ENCODE measurements at regions of chr1 and their contacts with region 1.

Region 1: DNA sequence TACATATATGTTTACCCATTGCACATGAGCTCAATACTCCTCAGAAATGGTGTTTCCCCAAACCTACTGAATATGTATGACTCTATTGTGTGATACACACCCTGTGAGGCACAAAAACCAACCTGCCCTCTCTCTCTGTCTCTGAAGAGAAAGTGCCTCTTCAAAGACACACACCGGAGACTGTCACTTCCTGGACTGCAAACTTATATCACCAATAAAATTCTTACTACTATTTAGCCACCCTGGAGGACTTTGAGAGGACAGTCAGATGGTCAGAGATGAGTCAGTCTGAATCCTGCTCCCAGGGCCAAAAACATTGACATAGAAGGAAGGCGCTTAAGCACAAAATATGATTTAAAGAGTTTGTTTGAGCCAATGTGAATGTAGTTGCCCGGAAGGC is 110.4 kb downstream of the PPIAL4G start:
- DNase-seq: peak; percentile 63 to 86 (median 69)
- H3K4me3 ChIP-seq: peak overlapping the region in 1 of 2 donors; percentile 0
- H3K4me3 Mint-ChIP-seq: peak overlapping the region; percentile 77 to 89 (median 83)
- H3K27ac ChIP-seq: peak overlapping the region; percentile 61
- H3K27ac Mint-ChIP-seq: peak overlapping the region; percentile 86 to 99 (median 98)
- H3K4me1 ChIP-seq: peaks cover 47% of the 10 kb centered on the region
- H3K4me1 Mint-ChIP-seq: peaks cover 28 to 51% (median 38%) of the 10 kb centered on the region in 4 donors
- H3K27me3 ChIP-seq: no peaks in the 10 kb centered on the region
- H3K27me3 Mint-ChIP-seq: no peaks in the 10 kb centered on the region

Region 2: DNA sequence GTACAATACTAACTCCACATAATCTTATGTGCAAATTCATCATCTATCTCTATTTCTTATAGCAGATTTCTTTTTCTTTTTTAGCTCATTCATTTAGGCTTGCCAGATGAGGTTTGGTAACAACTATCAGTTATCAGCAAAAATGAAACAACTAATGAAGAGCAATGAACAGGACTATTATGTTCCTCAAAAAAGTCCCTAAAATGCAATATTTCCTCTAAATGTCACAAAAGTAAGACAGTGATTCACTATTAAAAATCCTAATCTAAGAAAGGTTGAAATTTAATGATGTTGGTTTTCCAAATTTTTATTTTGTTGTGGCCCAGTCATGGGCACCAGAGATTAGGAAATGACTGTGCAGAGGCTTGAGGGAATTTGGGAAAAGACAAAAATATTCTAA is 24.9 kb before region 1 on chr1:
- CTCF ChIA-PET with region 1: no interaction called
- POLR2A ChIA-PET with region 1: no interaction called
- intact Hi-C with region 1: no loop called
- DNase-seq: no peak
- H3K4me3 ChIP-seq: no peak overlapping the region
- H3K4me3 Mint-ChIP-seq: no peak overlapping the region
- H3K27ac ChIP-seq: no peak overlapping the region
- H3K27ac Mint-ChIP-seq: no peak overlapping the region
- H3K4me1 ChIP-seq: no peaks in the 10 kb centered on the region
- H3K4me1 Mint-ChIP-seq: no peaks in the 10 kb centered on the region
- H3K27me3 ChIP-seq: no peaks in the 10 kb centered on the region
- H3K27me3 Mint-ChIP-seq: peaks cover 41 to 53% of the 10 kb centered on the region in 2 donors

Region 3: GRCh38 chr1:148388260-148389027 is 15.7 kb after region 1 on chr1:
- CTCF ChIA-PET with region 1: interaction called, 8 read pairs
- POLR2A ChIA-PET with region 1: interaction called, 98 read pairs
- intact Hi-C with region 1: loop called (anchors 2 kb)
- DNase-seq: peak; percentile 86 to 93 (median 87)
- H3K4me3 ChIP-seq: peak overlapping the region; percentile 52 to 67
- H3K4me3 Mint-ChIP-seq: peak overlapping the region; percentile 92 to 99 (median 96)
- H3K27ac ChIP-seq: peak overlapping the region; percentile 80
- H3K27ac Mint-ChIP-seq: peak overlapping the region; percentile 98 to 100 (median 100)
- H3K4me1 ChIP-seq: peaks cover 28% of the 10 kb centered on the region
- H3K4me1 Mint-ChIP-seq: peaks cover 24 to 46% (median 30%) of the 10 kb centered on the region in 4 donors
- H3K27me3 ChIP-seq: no peaks in the 10 kb centered on the region
- H3K27me3 Mint-ChIP-seq: no peaks in the 10 kb centered on the region

Region 4: GRCh38 chr1:148435406-148435805 is 62.7 kb after region 1 on chr1:
- CTCF ChIA-PET with region 1: interaction called, 9 read pairs
- POLR2A ChIA-PET with region 1: no interaction called
- intact Hi-C with region 1: loop called (anchors 2 kb)
- DNase-seq: no peak
- H3K4me3 ChIP-seq: no peak overlapping the region
- H3K4me3 Mint-ChIP-seq: peak overlapping the region in 3 of 8 donors; percentile 4 to 21 (median 18)
- H3K27ac ChIP-seq: no peak overlapping the region
- H3K27ac Mint-ChIP-seq: peak overlapping the region; percentile 3 to 67 (median 58)
- H3K4me1 ChIP-seq: peaks cover 19% of the 10 kb centered on the region
- H3K4me1 Mint-ChIP-seq: peaks cover 45 to 75% (median 62%) of the 10 kb centered on the region in 4 donors
- H3K27me3 ChIP-seq: no peaks in the 10 kb centered on the region
- H3K27me3 Mint-ChIP-seq: no peaks in the 10 kb centered on the region

Measured in CD4-positive, alpha-beta memory T cell (primary cell).